HEK293 (cell line): ENCODE measurements at regions of chr5 and their contacts with region 1.

Region 1: DNA sequence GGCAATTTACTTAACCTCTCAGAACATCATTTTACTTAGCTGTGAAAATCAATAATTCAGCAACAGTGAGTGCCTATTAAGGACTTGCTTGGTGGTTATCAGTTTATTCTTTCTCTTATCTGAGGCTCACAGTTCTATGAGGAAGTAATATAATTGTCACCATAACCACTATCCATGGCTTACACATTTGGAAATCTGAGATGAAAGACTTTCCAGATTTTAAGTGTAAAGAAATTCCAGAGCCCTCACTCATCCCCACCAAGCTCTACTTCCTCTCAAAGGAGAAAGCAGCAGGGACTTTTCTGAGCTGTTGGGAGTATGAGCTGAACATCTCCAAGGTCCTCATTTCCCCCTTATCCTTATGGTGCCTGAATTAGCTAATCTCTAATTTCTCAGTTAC is 321.5 kb downstream of the FBXL7 start:
- H3K4me3 ChIP-seq: no peak overlapping the region
- H3K27ac ChIP-seq: no peak overlapping the region
- H3K4me1 ChIP-seq: no peaks in the 10 kb centered on the region
- CTCF ChIP-seq: no peak

Region 2: DNA sequence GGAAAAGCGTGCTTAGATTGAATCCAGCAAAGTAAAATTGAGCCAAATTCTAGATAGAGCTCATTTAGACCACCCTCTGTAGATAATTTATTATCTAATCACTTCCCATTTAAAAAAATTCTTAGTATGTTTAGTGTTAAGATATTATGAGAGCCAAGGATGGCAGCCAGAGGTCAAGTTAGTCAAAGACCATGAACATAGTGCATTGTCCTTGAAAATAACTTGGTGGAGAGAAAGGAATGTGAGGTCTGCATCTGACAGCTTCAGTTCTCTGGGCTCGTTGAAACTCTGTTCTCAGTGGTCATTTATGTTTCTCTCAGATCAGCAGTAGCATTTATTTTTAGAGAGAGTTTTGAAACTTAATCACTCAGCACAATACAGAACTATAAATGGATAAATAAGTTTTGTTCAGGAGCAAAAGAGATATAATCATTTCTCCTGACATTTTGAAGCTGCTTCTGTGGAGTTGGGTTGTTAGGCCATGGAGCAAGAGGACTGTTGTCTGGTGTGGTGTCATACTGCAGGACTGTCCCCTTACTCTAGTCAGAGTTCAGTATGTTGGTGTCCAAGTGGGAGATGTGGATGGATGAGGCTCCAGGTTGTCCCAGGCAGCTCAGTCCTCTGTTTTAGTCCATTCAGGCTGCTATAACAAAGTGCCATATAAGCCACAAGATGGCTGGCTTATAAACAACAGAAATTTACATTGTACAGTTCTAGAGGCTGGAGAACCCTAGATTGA is 16.2 kb after region 1 on chr5:
- CTCF ChIA-PET with region 1: interaction called, 11 read pairs
- POLR2A ChIA-PET with region 1: no interaction called
- H3K4me3 ChIP-seq: no peak overlapping the region
- H3K27ac ChIP-seq: no peak overlapping the region
- H3K4me1 ChIP-seq: no peaks in the 10 kb centered on the region
- CTCF ChIP-seq: no peak

Region 3: GRCh38 chr5:16057277-16057676 is 235.8 kb after region 1 on chr5:
- CTCF ChIA-PET with region 1: no interaction called
- POLR2A ChIA-PET with region 1: no interaction called
- H3K4me3 ChIP-seq: no peak overlapping the region
- H3K27ac ChIP-seq: no peak overlapping the region
- H3K4me1 ChIP-seq: no peaks in the 10 kb centered on the region
- CTCF ChIP-seq: no peak